ENCODE measurements at regions of chr2 and their contacts with region 1.

Region 1: GRCh38 chr2:30421604-30422443 is 25.2 kb upstream of the LCLAT1 start:
- DNase-seq: peak in 5 of 9 donors; percentile 24 to 68 (median 44)
- ATAC-seq: peak; percentile 10
- H3K4me3 ChIP-seq: peak overlapping the region; percentile 32
- H3K4me3 Mint-ChIP-seq: peak overlapping the region; percentile 41 to 76 (median 70)
- H3K27ac ChIP-seq: peak overlapping the region; percentile 70
- H3K27ac Mint-ChIP-seq: peak overlapping the region; percentile 91 to 98 (median 93)
- H3K4me1 ChIP-seq: peaks cover 24 to 48% of the 10 kb centered on the region in 2 donors
- H3K4me1 Mint-ChIP-seq: peaks cover 35 to 64% (median 54%) of the 10 kb centered on the region in 7 donors
- H3K27me3 ChIP-seq: no peaks in the 10 kb centered on the region
- H3K27me3 Mint-ChIP-seq: no peaks in the 10 kb centered on the region

Region 2: DNA sequence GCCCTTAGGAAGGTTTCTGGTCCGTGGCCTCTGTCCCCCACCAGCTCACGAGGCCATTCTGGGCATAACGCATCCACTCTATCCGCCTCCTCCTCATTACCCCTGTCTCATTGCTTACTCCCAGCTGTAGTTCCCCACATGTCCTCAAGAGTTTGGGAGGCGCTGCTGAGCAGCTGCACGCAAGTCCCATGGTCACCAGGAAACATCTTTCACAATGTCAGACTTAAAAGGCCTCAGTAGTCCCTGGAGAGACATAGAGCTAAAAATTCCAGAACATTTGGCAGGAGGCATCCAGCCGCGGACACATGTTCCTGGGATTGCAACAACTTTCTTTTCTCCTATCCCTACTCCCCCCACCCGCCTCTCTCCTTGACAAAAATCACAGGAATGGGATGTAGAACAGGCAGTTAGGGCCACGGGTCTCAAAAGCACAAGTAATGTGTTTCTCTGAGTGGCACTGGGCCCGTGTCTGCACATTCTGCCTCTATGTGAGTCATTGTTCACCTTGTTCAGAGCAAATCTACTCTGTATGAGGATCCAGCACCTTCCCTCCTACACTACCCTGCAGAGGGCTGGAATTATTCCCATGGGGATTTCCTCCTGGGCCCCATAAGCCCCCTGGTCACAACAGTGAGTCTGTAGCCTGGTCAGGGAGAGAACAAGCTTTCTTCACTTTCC is 182.4 kb before region 1 on chr2:
- CTCF ChIA-PET with region 1: interaction called, 5 read pairs
- POLR2A ChIA-PET with region 1: interaction called, 48 read pairs
- intact Hi-C with region 1: loop called in 1 of 2 experiments (anchors 1 kb)
- DNase-seq: peak; percentile 55 to 79 (median 74)
- ATAC-seq: peak; percentile 88
- H3K4me3 ChIP-seq: peak overlapping the region; percentile 45
- H3K4me3 Mint-ChIP-seq: peak overlapping the region; percentile 65 to 98 (median 92)
- H3K27ac ChIP-seq: peak overlapping the region; percentile 97
- H3K27ac Mint-ChIP-seq: peak overlapping the region; percentile 61 to 100 (median 90)
- H3K4me1 ChIP-seq: peaks cover 75 to 87% of the 10 kb centered on the region in 2 donors
- H3K4me1 Mint-ChIP-seq: peaks cover 68 to 97% (median 89%) of the 10 kb centered on the region in 7 donors
- H3K27me3 ChIP-seq: no peaks in the 10 kb centered on the region
- H3K27me3 Mint-ChIP-seq: no peaks in the 10 kb centered on the region

Region 3: GRCh38 chr2:30252723-30253701 is 168.8 kb before region 1 on chr2:
- CTCF ChIA-PET with region 1: no interaction called
- POLR2A ChIA-PET with region 1: no interaction called
- intact Hi-C with region 1: loop called in 1 of 2 experiments (anchors 5 kb)
- DNase-seq: peak in 4 of 9 donors; percentile 38 to 83 (median 53)
- ATAC-seq: peak; percentile 36
- H3K4me3 ChIP-seq: no peak overlapping the region
- H3K4me3 Mint-ChIP-seq: peak overlapping the region; percentile 53 to 79 (median 72)
- H3K27ac ChIP-seq: peak overlapping the region; percentile 86
- H3K27ac Mint-ChIP-seq: peak overlapping the region; percentile 72 to 100 (median 97)
- H3K4me1 ChIP-seq: peaks cover 77 to 93% of the 10 kb centered on the region in 2 donors
- H3K4me1 Mint-ChIP-seq: peaks cover 65 to 99% (median 97%) of the 10 kb centered on the region in 7 donors
- H3K27me3 ChIP-seq: no peaks in the 10 kb centered on the region
- H3K27me3 Mint-ChIP-seq: no peaks in the 10 kb centered on the region

Region 4: GRCh38 chr2:30410217-30410616 is 11.6 kb before region 1 on chr2:
- CTCF ChIA-PET with region 1: no interaction called
- POLR2A ChIA-PET with region 1: interaction called, 8 read pairs
- intact Hi-C with region 1: loop called in 1 of 2 experiments (anchors 1 kb)
- DNase-seq: peak in 1 of 9 donors; percentile 29
- ATAC-seq: no peak
- H3K4me3 ChIP-seq: no peak overlapping the region
- H3K4me3 Mint-ChIP-seq: peak overlapping the region in 2 of 10 donors; percentile 8 to 51
- H3K27ac ChIP-seq: no peak overlapping the region
- H3K27ac Mint-ChIP-seq: peak overlapping the region in 7 of 9 donors; percentile 9 to 74 (median 31)
- H3K4me1 ChIP-seq: peaks cover 0 to 24% of the 10 kb centered on the region in 2 donors
- H3K4me1 Mint-ChIP-seq: peaks cover 22 to 59% (median 42%) of the 10 kb centered on the region in 7 donors
- H3K27me3 ChIP-seq: no peaks in the 10 kb centered on the region
- H3K27me3 Mint-ChIP-seq: no peaks in the 10 kb centered on the region

Region 5: DNA sequence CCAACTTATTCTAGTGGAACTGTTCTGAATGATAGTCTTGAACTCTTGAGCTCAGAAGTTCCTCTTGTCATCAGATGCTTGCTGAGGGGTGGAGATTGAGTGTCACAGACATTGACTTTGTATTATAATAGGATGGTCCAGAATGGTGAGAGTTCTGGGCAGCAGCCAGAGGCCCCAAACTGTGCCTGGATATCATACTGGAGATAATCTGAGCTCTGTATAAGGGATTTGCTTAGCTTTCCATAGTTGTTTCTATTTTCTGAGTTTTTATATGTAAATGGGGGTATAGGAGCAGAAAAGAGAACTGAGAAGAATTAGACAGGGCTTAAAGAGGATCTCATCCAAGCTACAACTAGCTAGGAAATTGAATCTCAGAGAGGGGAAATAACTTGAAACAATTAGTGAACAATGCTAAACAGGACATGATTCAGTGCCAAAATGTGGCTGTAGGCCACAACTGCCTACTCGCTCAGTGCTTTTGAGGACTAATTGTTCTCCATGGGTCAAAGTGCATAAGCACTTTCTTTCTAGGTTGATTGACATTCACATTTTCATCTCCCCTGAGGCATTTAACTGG is 15.1 kb after region 1 on chr2:
- CTCF ChIA-PET with region 1: interaction called, 3 read pairs
- POLR2A ChIA-PET with region 1: interaction called, 12 read pairs
- intact Hi-C with region 1: loop called in 1 of 2 experiments (anchors 1 kb)
- DNase-seq: no peak
- ATAC-seq: peak; percentile 33
- H3K4me3 ChIP-seq: no peak overlapping the region
- H3K4me3 Mint-ChIP-seq: no peak overlapping the region
- H3K27ac ChIP-seq: no peak overlapping the region
- H3K27ac Mint-ChIP-seq: peak overlapping the region in 4 of 9 donors; percentile 3 to 34 (median 6)
- H3K4me1 ChIP-seq: peaks cover 0 to 12% of the 10 kb centered on the region in 2 donors
- H3K4me1 Mint-ChIP-seq: peaks cover 14 to 40% (median 23%) of the 10 kb centered on the region in 7 donors
- H3K27me3 ChIP-seq: no peaks in the 10 kb centered on the region
- H3K27me3 Mint-ChIP-seq: no peaks in the 10 kb centered on the region

Region 6: GRCh38 chr2:30527859-30528258 is 106.0 kb after region 1 on chr2:
- CTCF ChIA-PET with region 1: no interaction called
- POLR2A ChIA-PET with region 1: no interaction called
- intact Hi-C with region 1: no loop called
- DNase-seq: no peak
- ATAC-seq: no peak
- H3K4me3 ChIP-seq: no peak overlapping the region
- H3K4me3 Mint-ChIP-seq: no peak overlapping the region
- H3K27ac ChIP-seq: no peak overlapping the region
- H3K27ac Mint-ChIP-seq: no peak overlapping the region
- H3K4me1 ChIP-seq: no peaks in the 10 kb centered on the region
- H3K4me1 Mint-ChIP-seq: peaks cover 3 to 8% (median 4%) of the 10 kb centered on the region in 7 donors
- H3K27me3 ChIP-seq: no peaks in the 10 kb centered on the region
- H3K27me3 Mint-ChIP-seq: no peaks in the 10 kb centered on the region